GM13976 (cell line): ENCODE measurements at regions of chr7 and their contacts with region 1.

Region 1: DNA sequence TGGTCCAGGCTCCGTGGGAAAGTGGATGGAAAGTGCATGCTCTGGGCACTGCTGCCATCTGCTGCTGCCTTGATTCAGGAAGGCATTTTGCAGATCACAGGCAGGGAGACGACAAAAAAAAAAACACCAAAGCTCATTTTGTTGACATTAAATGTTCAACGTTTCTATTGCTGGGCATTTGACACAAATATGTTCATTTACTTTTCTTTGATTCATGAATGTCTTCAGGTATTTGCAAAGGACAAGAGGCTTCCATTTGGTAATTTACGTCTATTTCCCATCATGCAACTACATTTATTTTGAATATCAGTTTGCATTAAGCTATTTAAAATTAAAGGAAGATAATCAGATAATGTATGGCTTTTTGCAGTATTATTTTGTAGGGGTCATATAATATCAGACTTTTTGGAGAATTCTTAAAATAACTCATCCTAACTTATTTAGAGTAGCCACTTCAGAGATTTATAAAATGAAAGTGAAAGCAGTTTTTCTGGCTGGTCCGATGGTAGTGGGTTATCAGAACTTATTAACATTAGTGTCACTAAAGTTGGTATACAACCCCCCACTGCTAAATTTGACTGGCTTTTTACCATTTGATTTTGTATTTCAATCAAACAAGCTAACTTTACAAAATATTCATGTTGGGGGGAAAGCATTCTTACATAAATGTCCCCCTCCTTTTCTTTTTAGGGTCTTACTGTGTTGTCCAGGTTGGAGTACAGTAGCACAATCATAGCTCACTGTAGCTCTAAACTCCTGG is 65.3 kb downstream of the PDIA4 start:
- DNase-seq: peak; percentile 71
- CTCF ChIP-seq: peak; percentile 73

Region 2: GRCh38 chr7:148262721-148263229 is 700.2 kb before region 1 on chr7:
- in situ Hi-C with region 1: loop called (anchors 25 kb)
- DNase-seq: peak; percentile 74
- CTCF ChIP-seq: peak; percentile 96

Region 3: DNA sequence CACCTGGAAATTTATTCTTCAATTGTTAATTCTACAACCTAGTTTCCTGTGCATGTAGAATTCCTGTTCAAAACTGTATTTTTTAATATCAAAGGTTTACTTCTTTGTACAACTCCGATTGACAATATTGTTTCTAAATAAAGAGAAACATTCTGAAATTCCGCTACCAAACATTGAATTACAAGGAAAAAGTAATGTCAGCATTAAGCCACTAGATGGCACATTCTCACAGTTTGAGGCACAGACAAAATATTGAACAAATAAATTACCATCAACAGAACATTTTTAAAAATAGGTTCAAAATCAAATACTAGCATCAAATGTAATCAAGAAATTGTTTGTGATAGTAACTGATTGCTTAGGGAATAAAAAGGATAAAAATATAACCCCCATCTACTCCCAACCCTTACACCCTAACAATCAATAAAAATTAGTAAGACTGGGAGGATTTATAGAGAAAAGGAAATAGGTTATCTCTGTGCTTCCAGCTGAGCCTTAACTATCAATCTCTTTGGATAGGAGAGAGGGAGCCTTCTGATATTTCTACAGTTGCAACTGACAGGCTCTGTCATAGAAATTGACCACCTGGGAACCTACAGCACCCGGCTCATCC is 459.0 kb before region 1 on chr7:
- in situ Hi-C with region 1: loop called (anchors 10 kb)
- DNase-seq: peak; percentile 44
- CTCF ChIP-seq: peak; percentile 58

Region 4: GRCh38 chr7:148575640-148576411 is 387.2 kb before region 1 on chr7:
- in situ Hi-C with region 1: loop called (anchors 10 kb)
- DNase-seq: peak; percentile 61
- CTCF ChIP-seq: peak; percentile 81

Region 5: GRCh38 chr7:149050941-149051340 is 87.9 kb after region 1 on chr7:
- in situ Hi-C with region 1: no loop called
- DNase-seq: no peak
- CTCF ChIP-seq: no peak